Endothelial cell of umbilical vein (primary cell): ENCODE measurements at regions of chr5 and their contacts with region 1.

Region 1: GRCh38 chr5:56200856-56201666 is 32.1 kb downstream of the ANKRD55 start:
- DNase-seq: peak; percentile 93
- H3K4me3 ChIP-seq: no peak overlapping the region
- H3K27ac ChIP-seq: peak overlapping the region; percentile 10
- H3K4me1 ChIP-seq: peaks cover 17% of the 10 kb centered on the region
- H3K27me3 ChIP-seq: no peaks in the 10 kb centered on the region
- CTCF ChIP-seq: peak; percentile 69 to 80
- POLR2A ChIP-seq: no peak

Region 2: DNA sequence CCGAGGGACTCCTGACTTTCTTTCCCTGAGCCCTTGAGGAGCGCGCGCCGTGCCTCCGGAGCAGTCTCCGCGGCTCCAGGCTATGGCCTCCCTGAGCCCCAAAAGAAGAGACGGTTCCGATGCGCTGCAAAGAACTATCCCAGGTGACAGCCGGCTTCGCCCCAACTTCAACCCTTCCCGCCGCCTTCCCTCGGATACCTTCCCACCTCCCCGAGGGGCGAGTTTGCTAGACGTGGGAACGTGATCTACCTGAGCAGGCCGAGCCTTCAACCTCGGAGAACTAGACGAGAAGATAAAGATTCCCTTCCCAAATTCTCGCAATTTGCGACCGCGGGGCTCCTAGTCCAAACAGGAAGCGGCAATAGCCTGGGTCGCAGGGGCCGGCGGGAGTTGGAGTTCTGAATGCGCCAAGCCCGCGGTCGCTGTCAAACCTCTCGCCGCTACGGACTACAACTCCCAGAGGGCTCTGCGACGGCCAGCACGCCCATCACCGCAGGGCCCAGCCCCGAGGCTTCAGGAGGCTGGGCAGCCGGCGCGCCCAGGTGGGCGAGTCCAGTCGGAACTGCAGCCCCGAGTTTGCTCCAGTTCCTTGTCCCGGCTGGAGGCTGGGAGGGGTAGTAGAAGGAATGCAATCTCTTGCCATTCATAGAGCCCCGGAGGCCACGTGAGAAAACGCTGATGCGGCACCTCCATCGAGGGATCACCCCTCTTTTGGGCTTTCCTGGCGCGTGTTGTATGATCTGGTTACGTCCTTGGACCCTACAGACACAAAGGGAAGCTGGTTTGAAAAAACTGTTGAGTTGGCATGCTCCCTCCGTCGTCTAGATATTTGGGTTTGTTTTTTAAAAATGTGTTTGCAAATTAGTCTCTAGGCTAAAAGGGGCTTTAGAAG is 488.8 kb before region 1 on chr5 and contains the start of gene SLC38A9:
- CTCF ChIA-PET with region 1: no interaction called
- POLR2A ChIA-PET with region 1: no interaction called
- dilution Hi-C with region 1: no loop called
- intact Hi-C with region 1: loop called (anchors 5 kb)
- DNase-seq: peak; percentile 93
- H3K4me3 ChIP-seq: peak within 1 kb of the TSS; percentile 66 to 81 (median 81)
- H3K27ac ChIP-seq: peak within 1 kb of the TSS; percentile 19
- H3K4me1 ChIP-seq: peaks cover 9% of the 10 kb centered on the region
- H3K27me3 ChIP-seq: no peaks in the 10 kb centered on the region
- CTCF ChIP-seq: no peak
- POLR2A ChIP-seq: peak; percentile 93
- total RNA-seq, gene SLC38A9: 24.9 and 29.0 TPM in 2 replicates

Region 3: GRCh38 chr5:55961714-55962113 is 239.3 kb before region 1 on chr5:
- CTCF ChIA-PET with region 1: interaction called, 11 read pairs
- POLR2A ChIA-PET with region 1: no interaction called
- dilution Hi-C with region 1: no loop called
- intact Hi-C with region 1: no loop called
- DNase-seq: no peak
- H3K4me3 ChIP-seq: no peak overlapping the region
- H3K27ac ChIP-seq: no peak overlapping the region
- H3K4me1 ChIP-seq: no peaks in the 10 kb centered on the region
- H3K27me3 ChIP-seq: no peaks in the 10 kb centered on the region
- CTCF ChIP-seq: no peak
- POLR2A ChIP-seq: no peak

Region 4: DNA sequence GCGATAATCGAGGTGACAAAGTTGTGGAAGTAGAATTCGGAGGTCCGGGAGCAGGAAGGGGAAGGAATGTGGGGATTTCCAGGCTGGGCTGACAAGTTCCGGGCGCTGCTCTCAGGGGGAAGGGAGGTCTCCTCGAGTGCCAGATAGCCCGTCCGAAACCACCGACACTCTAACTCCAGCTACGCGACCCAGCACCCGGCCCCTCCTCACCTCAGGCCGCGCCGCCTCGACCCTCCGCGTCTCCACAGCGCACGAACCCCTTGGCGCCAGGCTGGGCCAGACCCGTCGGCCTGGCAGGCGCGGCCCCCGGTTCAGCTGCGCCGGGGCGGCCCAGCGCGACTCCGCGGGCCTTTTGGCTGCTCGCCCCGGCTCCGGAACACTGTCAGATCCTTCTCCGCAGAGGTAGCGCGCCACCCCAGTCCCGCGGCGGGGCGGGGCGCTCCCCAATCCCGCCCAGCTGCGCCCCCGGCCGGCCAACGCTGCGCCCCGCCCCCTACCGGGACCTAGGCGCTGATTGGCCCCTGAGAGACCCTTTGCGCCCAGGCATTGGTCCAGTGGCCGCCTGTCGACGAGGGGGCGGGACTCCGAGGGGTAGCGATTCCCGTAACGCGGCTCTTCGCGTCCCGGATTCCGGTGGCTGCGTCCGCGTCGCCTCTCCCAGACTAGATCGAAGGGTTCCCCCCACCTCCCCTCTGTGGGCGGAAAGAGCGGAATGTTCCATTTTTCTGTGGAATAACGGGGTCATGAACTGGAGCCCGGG is 206.3 kb before region 1 on chr5 and contains the start of gene IL6ST:
- CTCF ChIA-PET with region 1: interaction called, 4 read pairs
- POLR2A ChIA-PET with region 1: no interaction called
- dilution Hi-C with region 1: no loop called
- intact Hi-C with region 1: loop called (anchors 1 kb)
- DNase-seq: peak; percentile 99
- H3K4me3 ChIP-seq: peak within 1 kb of the TSS; percentile 70 to 100 (median 99)
- H3K27ac ChIP-seq: peak within 1 kb of the TSS; percentile 99
- H3K4me1 ChIP-seq: peaks cover 30% of the 10 kb centered on the region
- H3K27me3 ChIP-seq: no peaks in the 10 kb centered on the region
- CTCF ChIP-seq: no peak
- POLR2A ChIP-seq: peak; percentile 95
- total RNA-seq, gene IL6ST: 345 and 361 TPM in 2 replicates

Region 5: DNA sequence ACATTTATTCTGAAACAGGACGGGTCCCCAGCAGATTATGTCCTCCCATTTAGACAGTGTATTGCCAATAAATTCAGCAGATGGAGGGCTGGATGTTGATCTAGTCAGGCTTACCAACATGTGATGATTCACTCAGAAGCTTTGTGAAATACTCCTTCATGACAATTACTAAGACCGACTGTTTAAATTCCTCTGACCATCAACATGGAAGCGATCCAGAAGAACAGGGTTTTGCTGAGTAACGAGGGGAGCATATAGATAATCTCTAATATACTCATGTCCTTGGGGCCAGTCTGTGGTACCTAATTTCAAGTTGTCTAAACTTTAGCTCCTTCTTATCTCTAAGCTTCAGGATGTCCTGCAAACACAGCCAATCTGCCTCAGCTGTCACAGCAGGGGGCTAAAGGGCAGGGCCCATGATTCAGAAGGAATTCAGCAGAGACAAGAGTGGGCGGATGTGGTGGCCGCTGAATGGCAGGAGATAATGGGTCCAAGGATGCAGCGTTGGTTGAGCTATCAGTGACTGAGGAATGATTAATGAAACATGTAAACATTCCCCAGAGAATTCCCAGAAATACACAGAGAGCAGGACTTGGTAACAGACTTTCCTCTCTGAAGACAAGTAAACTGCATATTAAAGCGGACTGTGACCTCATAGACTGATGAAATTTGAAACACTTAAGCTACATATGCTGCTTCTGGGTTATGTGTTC is 77.4 kb before region 1 on chr5:
- CTCF ChIA-PET with region 1: interaction called, 23 read pairs
- POLR2A ChIA-PET with region 1: no interaction called
- dilution Hi-C with region 1: loop called (anchors 10 kb)
- intact Hi-C with region 1: loop called (anchors 1 kb)
- DNase-seq: peak; percentile 99
- H3K4me3 ChIP-seq: peak overlapping the region in 1 of 3 experiments; percentile 33
- H3K27ac ChIP-seq: peak overlapping the region; percentile 83
- H3K4me1 ChIP-seq: peaks cover 40% of the 10 kb centered on the region
- H3K27me3 ChIP-seq: no peaks in the 10 kb centered on the region
- CTCF ChIP-seq: no peak
- POLR2A ChIP-seq: peak; percentile 74